OCI-LY7 (cell line): ENCODE measurements at regions of chr16 and their contacts with region 1.

Region 1: GRCh38 chr16:84970447-84971127 is 40.7 kb downstream of the ZDHHC7 start:
- DNase-seq: peak; percentile 82
- H3K4me3 ChIP-seq: no peak overlapping the region
- H3K27ac ChIP-seq: no peak overlapping the region
- H3K4me1 ChIP-seq: no peaks in the 10 kb centered on the region
- CTCF ChIP-seq: peak; percentile 96

Region 2: DNA sequence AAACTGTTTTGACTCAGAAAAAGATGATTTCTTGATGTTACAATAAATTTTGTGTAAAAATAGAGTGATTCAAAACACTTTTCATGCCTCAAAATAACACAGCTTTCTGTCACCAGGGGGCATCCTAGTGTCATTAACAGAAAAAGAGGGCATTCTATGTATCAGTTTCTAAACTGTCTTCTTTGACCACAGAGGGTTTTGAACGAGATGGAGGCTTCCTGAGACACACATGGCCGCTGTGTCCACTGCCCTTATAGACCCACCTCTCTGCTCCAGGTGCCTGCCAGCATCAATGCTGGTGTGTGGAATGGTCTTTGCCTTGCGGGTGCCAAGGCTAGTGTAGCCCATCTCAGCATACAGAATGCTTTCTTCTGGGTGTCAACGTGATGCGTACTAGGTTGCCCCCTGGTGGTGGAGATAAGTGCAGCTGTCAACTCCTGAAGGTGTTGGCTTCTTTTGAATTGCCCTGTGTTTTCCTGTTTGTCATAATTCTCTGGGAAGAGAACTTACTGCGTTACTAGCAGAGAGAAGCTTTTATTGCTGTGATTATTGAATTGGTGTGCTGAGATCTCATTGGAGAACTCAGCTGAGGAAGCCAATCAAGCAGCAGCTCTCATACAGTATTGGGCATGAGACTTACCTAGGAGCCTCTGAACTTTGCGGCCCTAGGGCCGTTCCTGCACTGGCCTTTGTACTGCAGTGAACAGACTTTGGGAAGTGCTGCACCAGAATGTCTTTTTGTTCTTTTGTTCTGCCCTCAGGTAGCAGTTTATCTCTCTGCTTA is 232.1 kb before region 1 on chr16:
- CTCF ChIA-PET with region 1: no interaction called
- POLR2A ChIA-PET with region 1: no interaction called
- intact Hi-C with region 1: loop called (anchors 5 kb)
- DNase-seq: peak; percentile 88
- H3K4me3 ChIP-seq: no peak overlapping the region
- H3K27ac ChIP-seq: no peak overlapping the region
- H3K4me1 ChIP-seq: peaks cover 22% of the 10 kb centered on the region
- CTCF ChIP-seq: peak; percentile 99

Region 3: DNA sequence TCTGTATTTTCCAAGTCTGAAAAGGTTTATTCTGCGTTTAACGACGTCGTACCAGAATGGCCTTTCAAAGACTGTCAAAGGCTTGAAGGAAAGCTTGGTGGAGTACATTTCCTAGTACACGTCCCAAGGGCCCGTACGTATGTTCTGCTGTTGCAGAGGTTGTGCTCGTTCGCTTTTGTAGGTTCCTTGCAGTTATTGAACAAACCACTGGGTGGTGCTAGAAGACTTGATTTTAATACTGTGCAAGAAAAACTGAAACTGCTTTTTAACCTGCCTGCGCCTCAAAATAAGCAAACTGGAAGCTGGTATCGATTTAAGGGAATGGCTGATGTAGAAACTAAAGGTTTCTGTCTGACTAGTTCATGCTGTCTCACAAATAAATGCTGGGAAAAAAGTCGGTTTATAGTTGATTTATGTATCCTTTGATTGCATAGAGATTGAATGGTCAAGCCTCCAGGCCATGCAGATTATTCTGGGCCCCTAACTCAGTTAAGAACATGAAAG is 216.2 kb before region 1 on chr16:
- CTCF ChIA-PET with region 1: interaction called, 3 read pairs
- POLR2A ChIA-PET with region 1: no interaction called
- intact Hi-C with region 1: loop called (anchors 1 kb)
- DNase-seq: peak; percentile 87
- H3K4me3 ChIP-seq: no peak overlapping the region
- H3K27ac ChIP-seq: no peak overlapping the region
- H3K4me1 ChIP-seq: peaks cover 27% of the 10 kb centered on the region
- CTCF ChIP-seq: peak; percentile 95

Region 4: DNA sequence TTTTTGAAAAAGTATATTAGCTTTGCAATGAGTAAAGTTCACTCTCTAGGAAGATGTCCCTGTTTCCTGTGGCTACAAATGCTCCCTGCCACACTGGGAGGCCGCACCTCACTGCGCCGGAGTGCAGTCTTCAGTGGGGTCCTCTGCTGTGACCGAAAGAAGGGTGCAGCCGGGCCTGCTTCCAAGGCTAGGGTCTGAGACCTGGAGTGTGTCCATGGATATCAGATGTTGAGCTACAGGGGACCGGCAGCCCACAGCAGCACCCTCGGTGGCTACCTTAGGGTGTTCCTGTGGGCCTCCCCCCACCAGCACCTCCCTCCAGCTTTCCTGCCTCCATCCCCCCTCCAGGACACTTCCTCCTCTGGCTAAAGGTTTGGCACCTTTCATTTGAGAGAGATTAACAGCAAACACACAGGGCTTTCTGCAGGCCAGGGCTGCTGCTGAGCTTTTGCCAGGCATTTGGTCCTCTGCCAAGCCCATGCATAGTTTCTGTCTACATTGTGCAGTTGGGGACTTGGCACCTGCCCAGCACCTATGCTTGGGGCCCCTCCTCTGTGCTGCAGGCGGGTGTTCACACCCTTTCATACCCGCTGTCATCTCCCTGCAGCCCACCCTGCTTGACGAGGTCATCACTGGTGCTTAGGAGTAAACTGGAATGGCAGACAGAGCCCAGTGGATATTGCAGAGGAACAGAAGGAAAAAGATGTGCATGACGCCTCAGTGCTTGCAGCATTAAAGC is 184.6 kb before region 1 on chr16:
- CTCF ChIA-PET with region 1: no interaction called
- POLR2A ChIA-PET with region 1: no interaction called
- intact Hi-C with region 1: loop called (anchors 10 kb)
- DNase-seq: no peak
- H3K4me3 ChIP-seq: no peak overlapping the region
- H3K27ac ChIP-seq: no peak overlapping the region
- H3K4me1 ChIP-seq: no peaks in the 10 kb centered on the region
- CTCF ChIP-seq: no peak

Region 5: GRCh38 chr16:84898447-84898846 is 72.1 kb before region 1 on chr16:
- CTCF ChIA-PET with region 1: no interaction called
- POLR2A ChIA-PET with region 1: no interaction called
- intact Hi-C with region 1: no loop called
- DNase-seq: no peak
- H3K4me3 ChIP-seq: no peak overlapping the region
- H3K27ac ChIP-seq: no peak overlapping the region
- H3K4me1 ChIP-seq: peaks cover 28% of the 10 kb centered on the region
- CTCF ChIP-seq: no peak

Region 6: DNA sequence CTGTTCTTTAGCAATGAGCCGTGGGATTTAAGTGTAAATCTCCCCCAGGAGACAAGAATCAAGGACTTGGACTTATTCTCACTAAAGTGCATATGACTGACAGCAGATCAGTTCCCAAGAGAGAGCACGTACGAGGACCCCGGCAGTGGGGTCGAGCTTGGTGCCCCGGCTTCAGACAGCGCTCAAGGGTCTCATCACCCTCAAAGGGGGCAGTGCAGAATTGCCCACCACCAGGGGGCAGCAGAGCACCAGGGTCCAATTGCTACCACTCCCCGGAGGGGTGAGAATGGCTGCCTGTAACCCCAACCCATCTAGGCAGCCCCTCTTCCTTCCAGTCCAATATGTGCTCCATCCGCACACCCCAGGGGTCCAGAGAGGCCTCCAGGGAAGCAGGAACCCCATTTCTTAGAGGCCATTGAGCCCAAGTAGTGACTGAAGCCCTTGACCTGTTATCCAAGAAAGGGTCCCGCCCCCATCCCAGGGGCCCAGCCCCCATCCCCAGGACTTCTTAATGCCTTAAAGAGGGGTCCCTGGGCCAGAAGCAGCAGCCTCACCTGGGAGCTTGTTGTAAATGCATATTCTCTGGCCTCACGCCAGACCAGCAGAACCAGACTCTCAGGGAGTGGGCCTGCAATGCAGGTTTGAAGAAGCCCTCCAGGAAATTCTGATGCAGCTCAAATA is 45.4 kb before region 1 on chr16:
- CTCF ChIA-PET with region 1: no interaction called
- POLR2A ChIA-PET with region 1: no interaction called
- intact Hi-C with region 1: loop called (anchors 1 kb)
- DNase-seq: peak; percentile 70
- H3K4me3 ChIP-seq: no peak overlapping the region
- H3K27ac ChIP-seq: no peak overlapping the region
- H3K4me1 ChIP-seq: no peaks in the 10 kb centered on the region
- CTCF ChIP-seq: peak; percentile 97